ENCODE measurements at regions of chr7 and their contacts with region 1.

Region 1: GRCh38 chr7:93043385-93043985 is 74.3 kb downstream of the SAMD9 start:
- DNase-seq: peak in 1 of 2 donors; percentile 80
- ATAC-seq: peak; percentile 50
- H3K4me3 ChIP-seq: peak overlapping the region in 1 of 2 donors; percentile 10
- H3K27ac ChIP-seq: no peak overlapping the region
- H3K4me1 ChIP-seq: no peaks in the 10 kb centered on the region
- H3K27me3 ChIP-seq: no peaks in the 10 kb centered on the region

Region 2: DNA sequence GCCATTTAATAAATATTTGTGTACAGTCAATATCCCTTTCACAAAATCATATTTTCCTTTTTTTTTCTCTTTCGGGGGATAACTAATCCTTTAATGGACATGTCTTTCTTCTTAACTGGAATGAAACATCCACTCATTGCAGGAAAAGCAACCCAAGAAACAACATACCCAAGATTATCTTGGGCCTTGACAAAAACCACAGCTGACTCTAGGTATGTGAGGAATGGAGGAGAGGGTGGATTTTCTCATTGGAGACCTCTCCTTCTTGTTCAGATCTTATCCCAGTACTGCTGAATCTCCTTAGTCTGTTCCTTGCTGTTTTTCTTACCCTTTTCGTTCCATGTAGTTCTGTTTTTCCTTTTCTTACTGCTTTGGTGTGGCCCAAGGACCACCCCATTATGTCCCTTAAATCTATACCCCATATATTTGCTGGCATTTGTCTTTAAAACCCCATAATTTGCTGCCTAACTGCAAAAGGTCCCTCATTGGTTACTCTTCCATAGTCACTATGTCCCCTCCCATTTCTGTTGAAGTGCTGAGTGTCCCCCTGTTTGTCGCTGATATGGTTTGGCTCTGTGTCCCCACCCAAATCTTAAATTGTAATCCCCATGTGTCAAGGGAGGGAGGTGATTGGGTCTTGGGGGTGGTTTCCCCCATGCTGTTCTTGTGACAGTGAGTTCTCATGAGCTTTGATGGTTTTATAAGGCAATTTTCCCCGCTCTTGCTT is 200.3 kb before region 1 on chr7:
- intact Hi-C with region 1: loop called in 1 of 2 experiments (anchors 10 kb)
- DNase-seq: no peak
- ATAC-seq: no peak
- H3K4me3 ChIP-seq: no peak overlapping the region
- H3K27ac ChIP-seq: no peak overlapping the region
- H3K4me1 ChIP-seq: no peaks in the 10 kb centered on the region
- H3K27me3 ChIP-seq: peaks cover 0 to 2% of the 10 kb centered on the region in 2 donors

Measured in aorta (tissue), 5 donors.